ENCODE measurements at regions of chr2 and their contacts with region 1.

Region 1: DNA sequence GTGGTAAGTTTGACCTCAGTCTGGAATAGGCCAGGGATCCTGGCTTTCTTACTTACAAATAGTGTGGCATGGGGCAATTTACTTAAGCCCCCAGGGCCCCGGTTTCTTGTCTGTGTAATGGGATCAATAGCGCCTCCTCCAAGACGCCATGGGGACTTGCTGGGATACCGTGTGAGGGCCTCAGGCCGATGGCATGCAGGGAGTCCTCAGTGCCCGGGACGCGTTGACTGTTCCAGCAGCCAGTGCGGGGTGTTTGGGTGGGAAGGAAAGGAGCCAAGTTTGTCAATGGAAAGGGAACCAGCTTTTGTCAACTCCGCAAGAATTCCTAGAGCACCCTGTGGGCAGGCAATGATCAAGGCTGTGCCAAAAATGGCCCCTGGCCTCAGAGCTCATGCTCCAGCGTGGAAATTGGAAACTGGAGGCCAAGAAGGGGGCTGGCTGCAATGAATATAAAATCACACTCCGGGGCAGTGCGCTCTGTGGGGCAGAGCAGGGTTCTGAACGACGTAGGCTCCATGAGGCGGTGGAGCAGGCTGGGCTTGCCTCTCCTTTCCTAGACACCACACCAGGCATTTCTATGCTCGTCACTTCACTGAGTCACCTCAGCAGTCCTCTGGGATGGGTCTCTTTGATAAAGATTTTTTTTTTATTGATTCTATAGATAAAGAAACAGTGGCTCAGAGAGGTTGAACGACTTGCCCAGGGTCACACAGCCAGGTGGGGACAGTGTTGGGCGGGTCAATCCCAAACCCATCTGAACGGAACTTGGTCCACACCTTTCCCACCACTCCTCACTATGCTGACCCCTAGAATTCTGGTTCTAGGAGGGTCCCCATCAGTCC is 56.7 kb upstream of the ASAP2 start:
- DNase-seq: no peak
- H3K4me3 ChIP-seq: no peak overlapping the region
- H3K27ac ChIP-seq: no peak overlapping the region
- H3K27me3 ChIP-seq: no peaks in the 10 kb centered on the region
- CTCF ChIP-seq: no peak

Region 2: DNA sequence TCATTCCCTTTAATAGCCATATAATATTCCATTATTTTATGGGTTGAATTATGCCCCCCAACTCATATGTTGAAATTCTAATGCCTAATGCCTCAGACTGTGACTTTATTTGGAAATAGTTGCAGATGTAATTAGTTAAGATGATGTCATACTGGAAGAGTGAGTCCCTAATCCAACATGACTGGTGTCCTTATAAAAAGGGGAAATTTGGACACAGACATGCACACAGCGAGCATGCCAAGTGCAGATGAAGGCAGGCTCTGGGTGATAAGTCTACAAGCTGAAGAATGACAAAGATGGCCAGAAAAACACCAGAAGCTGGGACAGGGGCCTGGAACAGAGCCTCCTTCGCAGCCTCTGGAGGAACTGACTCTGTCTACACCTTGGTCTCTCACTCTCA is 46.7 kb after region 1 on chr2:
- intact Hi-C with region 1: loop called in 1 of 2 experiments (anchors 2 kb)
- DNase-seq: no peak
- H3K4me3 ChIP-seq: no peak overlapping the region
- H3K27ac ChIP-seq: no peak overlapping the region
- H3K27me3 ChIP-seq: peaks cover 0 to 2% (median 0%) of the 10 kb centered on the region in 45 donors
- CTCF ChIP-seq: no peak

Region 3: DNA sequence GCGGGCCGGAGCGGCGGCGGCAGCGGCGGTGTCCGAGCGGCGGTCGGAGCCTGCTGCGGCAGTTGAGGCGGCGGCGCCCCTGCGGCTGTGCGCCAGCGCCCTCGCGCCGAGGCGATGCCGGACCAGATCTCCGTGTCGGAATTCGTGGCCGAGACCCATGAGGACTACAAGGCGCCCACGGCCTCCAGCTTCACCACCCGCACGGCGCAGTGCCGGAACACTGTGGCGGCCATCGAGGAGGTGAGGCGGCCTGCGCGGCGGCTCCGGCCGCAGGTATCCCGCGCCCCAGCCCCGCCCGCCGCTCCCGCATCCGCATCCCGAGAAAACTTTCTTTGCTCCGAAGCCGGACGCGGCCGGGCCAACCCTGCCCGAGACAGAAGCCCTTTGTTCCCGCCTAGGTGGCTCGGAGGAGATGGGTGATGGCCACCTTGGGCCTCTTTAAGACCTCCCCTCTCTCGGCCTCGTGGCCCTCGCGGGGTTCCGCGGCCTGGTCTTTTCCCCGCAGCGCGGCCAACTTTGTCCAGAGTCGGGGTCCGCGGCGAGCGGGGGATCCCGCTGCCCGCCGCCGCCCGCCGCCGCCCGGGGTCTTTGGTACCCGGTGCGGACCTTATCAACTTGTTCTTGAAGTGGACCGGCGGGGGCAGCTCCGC is 57.2 kb after region 1 on chr2:
- intact Hi-C with region 1: no loop called
- DNase-seq: peak in 4 of 10 donors; percentile 35 to 68 (median 51)
- H3K4me3 ChIP-seq: peak overlapping the region; percentile 63 to 91 (median 83)
- H3K27ac ChIP-seq: peak overlapping the region in 56 of 59 donors; percentile 4 to 87 (median 74)
- H3K27me3 ChIP-seq: no peaks in the 10 kb centered on the region
- CTCF ChIP-seq: peak in 1 of 56 donors; percentile 6

Region 4: GRCh38 chr2:10591207-10591606 is 1441.3 kb after region 1 on chr2:
- intact Hi-C with region 1: no loop called
- DNase-seq: no peak
- H3K4me3 ChIP-seq: no peak overlapping the region
- H3K27ac ChIP-seq: no peak overlapping the region
- H3K27me3 ChIP-seq: no peaks in the 10 kb centered on the region
- CTCF ChIP-seq: no peak

Measured in dorsolateral prefrontal cortex (tissue), 120 donors.